ENCODE measurements at regions of chr3 and their contacts with region 1.

Region 1: DNA sequence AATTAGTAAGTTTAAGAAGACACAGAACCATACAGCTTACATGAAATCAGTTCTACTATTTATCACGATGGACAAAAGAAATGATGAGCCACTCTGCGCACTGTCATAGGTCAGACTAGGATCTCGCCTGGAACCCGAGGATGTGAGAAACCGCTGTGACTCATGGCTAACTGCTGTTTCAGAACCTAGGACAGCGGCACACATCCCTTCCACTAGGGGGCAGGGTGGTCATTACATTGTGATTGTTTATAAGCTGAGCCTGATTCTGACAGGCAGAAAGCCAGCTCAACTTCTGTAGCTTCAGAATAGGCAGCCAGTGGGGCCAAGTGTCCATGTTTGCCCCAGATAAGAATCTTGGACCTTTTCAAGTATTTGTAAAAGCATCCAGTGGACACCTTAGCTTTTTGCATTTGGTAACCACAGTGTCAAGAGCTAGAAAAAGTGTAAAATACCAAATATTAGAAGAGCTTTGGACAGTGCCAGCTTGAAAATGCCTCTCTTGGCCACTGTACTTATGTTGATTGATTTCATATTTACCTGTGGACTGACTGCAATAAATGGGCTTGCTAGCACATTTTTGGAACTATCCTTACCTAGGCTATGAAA is 115.8 kb downstream of the KBTBD8 start:
- DNase-seq: peak; percentile 70
- H3K4me3 ChIP-seq: no peak overlapping the region
- H3K27ac ChIP-seq: no peak overlapping the region
- H3K27me3 ChIP-seq: no peaks in the 10 kb centered on the region
- CTCF ChIP-seq: peak; percentile 97

Region 2: GRCh38 chr3:66253790-66254620 is 859.9 kb before region 1 on chr3:
- CTCF ChIA-PET with region 1: interaction called, 11 read pairs
- POLR2A ChIA-PET with region 1: no interaction called
- DNase-seq: no peak
- H3K4me3 ChIP-seq: no peak overlapping the region
- H3K27ac ChIP-seq: no peak overlapping the region
- H3K27me3 ChIP-seq: no peaks in the 10 kb centered on the region
- CTCF ChIP-seq: peak; percentile 62

Region 3: DNA sequence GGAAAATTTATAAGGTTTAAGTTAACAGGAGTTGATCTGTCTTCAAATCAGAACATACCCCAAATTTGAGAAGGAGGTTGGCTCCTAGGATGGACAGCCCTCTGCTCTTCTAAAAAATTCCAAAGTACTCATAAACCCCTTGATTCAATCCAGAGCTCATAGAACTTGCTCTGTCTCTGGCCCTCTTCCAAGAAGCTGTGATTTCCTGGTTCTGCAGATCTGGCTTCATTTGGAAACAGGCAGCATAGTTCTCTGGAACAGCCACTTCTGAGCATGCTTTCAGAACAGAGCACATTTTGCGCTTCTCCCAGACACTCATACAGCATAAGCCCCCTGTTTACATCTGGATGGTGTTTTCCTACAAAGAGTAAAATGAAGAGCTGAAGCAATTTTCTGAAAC is 19.1 kb before region 1 on chr3:
- CTCF ChIA-PET with region 1: interaction called, 29 read pairs
- POLR2A ChIA-PET with region 1: no interaction called
- DNase-seq: no peak
- H3K4me3 ChIP-seq: no peak overlapping the region
- H3K27ac ChIP-seq: no peak overlapping the region
- H3K27me3 ChIP-seq: no peaks in the 10 kb centered on the region
- CTCF ChIP-seq: no peak

Region 4: GRCh38 chr3:67377299-67377698 is 263.4 kb after region 1 on chr3:
- CTCF ChIA-PET with region 1: interaction called, 12 read pairs
- POLR2A ChIA-PET with region 1: no interaction called
- DNase-seq: no peak
- H3K4me3 ChIP-seq: no peak overlapping the region
- H3K27ac ChIP-seq: no peak overlapping the region
- H3K27me3 ChIP-seq: no peaks in the 10 kb centered on the region
- CTCF ChIP-seq: no peak

Region 5: DNA sequence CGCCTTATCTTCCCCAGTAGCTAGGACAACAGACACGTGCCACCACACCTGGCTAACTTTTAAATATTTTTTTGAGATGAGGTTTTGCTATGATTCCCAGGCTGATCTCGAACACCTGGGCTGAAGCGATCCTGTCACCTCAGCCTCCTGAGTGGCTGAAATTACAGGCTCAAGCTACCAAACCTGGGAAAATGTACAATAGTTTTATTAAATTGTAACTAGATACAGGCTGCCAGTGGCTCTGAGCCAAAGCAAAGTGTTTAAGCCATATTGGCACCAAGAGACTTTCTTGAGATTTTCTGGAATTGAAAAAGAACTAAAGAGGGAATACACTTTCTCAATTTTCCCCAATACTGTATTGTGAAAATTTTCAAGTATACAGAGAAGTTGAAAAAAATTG is 336.2 kb after region 1 on chr3:
- CTCF ChIA-PET with region 1: no interaction called
- POLR2A ChIA-PET with region 1: no interaction called
- DNase-seq: no peak
- H3K4me3 ChIP-seq: no peak overlapping the region
- H3K27ac ChIP-seq: no peak overlapping the region
- H3K27me3 ChIP-seq: no peaks in the 10 kb centered on the region
- CTCF ChIP-seq: no peak

Region 6: GRCh38 chr3:68876112-68876713 is 1762.3 kb after region 1 on chr3:
- CTCF ChIA-PET with region 1: interaction called, 36 read pairs
- POLR2A ChIA-PET with region 1: no interaction called
- DNase-seq: peak; percentile 39
- H3K4me3 ChIP-seq: no peak overlapping the region
- H3K27ac ChIP-seq: no peak overlapping the region
- H3K27me3 ChIP-seq: peaks cover 3% of the 10 kb centered on the region
- CTCF ChIP-seq: peak; percentile 92

Measured in AG04450 (cell line).